ENCODE measurements at regions of chr16 and their contacts with region 1.

Region 1: GRCh38 chr16:11546608-11547061 is 40.1 kb downstream of the LITAF start:
- DNase-seq: no peak
- CTCF ChIP-seq: no peak

Region 2: DNA sequence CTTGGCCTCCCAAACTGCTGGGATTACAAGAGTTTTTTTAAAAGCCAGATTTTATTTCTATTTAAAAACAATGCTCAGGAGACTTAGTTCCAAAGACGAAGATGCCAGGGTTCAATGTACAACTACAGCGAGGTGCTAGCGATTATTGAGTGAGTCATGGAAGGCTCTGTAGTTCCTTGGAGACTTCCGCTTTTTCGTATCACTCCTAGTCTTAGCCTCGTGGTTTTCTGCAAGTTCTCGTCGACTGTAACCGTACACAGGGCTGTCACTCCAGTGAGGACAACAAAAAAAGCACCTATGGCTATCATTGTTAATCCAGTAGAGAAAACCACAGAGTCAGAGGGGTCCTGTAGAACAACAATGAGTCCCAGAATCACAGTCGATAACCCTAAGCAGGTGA is 273.2 kb after region 1 on chr16:
- in situ Hi-C with region 1: loop called (anchors 10 kb)
- DNase-seq: no peak
- CTCF ChIP-seq: no peak